ENCODE measurements at regions of chr1 and their contacts with region 1.

Region 1: GRCh38 chr1:81800695-81801650 is at the start of gene ADGRL2:
- DNase-seq: peak; percentile 74 to 91
- ATAC-seq: peak; percentile 84 to 92 (median 88)
- H3K4me3 ChIP-seq: peak within 1 kb of the TSS; percentile 70 to 99 (median 92)
- H3K27ac ChIP-seq: peak within 1 kb of the TSS; percentile 93 to 99 (median 98)
- H3K4me1 ChIP-seq: peaks cover 0 to 37% (median 18%) of the 10 kb centered on the region in 9 donors
- H3K27me3 ChIP-seq: peaks cover 0 to 46% (median 0%) of the 10 kb centered on the region in 7 donors
- CTCF ChIP-seq: no peak
- total RNA-seq, gene ADGRL2: 40.0 to 58.7 (median 49.3) TPM

Region 2: DNA sequence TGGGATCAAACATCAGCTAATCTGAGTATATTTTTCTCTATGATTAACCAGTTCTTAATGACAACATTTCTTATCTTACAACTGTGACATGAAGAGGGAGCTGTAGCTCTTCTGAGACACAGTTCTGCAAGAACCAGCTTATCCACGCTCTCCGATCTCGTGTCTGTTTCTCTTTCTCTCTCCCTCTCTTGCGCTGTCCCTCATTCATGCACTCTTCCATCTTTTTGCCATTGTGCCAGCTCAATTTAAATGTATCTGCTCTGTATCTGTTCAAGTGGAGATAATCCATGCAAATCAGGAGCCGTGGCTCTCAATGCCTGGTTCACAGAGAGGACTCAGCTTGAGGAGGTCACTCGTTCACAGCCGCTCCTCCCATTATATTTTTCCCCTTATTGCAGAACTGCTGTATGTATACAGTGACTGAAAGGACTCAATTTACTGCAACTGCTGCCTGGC is 494.9 kb before region 1 on chr1:
- intact Hi-C with region 1: loop called in 6 of 10 experiments (anchors 2 to 10 kb)
- DNase-seq: peak in 1 of 2 donors; percentile 24
- ATAC-seq: peak; percentile 84 to 94 (median 91)
- H3K4me3 ChIP-seq: peak overlapping the region; percentile 26 to 64 (median 55)
- H3K27ac ChIP-seq: peak overlapping the region in 6 of 10 donors; percentile 13 to 55 (median 18)
- H3K4me1 ChIP-seq: no peaks in the 10 kb centered on the region
- H3K27me3 ChIP-seq: no peaks in the 10 kb centered on the region
- CTCF ChIP-seq: peak in 8 of 9 donors; percentile 32 to 76 (median 56)

Region 3: GRCh38 chr1:81820765-81821164 is 19.8 kb after region 1 on chr1:
- intact Hi-C with region 1: no loop called
- DNase-seq: no peak
- ATAC-seq: no peak
- H3K4me3 ChIP-seq: no peak overlapping the region
- H3K27ac ChIP-seq: no peak overlapping the region
- H3K4me1 ChIP-seq: peaks cover 0 to 26% (median 3%) of the 10 kb centered on the region in 9 donors
- H3K27me3 ChIP-seq: no peaks in the 10 kb centered on the region
- CTCF ChIP-seq: no peak

Region 4: DNA sequence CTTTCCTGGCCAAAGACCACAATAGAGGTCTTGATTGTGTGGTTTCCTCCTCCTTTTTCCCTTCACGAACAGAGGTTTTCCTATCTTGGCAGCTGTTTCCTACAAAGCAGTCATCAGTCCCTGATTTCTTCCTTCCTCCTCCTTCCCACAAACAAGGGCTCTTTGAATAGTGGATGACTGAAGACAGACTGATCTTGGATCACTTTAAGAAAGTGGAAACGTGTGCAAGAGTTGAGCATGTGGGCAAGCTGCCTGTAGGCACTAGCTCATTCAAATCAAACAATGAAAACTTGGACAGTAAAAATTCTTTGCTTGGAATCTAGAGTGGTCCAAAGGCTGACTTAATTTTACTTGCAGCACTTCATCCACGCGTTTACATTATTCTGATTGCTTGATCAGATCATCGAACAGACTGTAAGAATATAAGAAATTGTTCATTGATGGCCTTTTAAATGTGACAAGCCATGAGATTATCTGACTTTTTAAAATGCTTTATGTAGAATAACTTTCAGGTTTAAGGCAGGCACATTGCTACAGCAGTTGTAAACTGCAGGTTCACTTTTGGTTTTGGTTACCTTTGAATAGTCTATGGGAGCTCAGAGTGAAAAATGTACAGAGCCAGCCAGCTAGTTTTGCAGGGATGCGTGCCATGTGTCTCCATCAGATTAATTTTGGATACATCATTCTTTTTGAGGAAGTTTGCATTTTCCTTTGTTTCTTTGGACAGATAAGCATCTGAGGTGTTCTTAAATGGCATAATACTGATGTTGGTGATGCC is 34.1 kb after region 1 on chr1:
- intact Hi-C with region 1: no loop called
- DNase-seq: peak in 1 of 2 donors; percentile 41
- ATAC-seq: peak; percentile 68 to 93 (median 88)
- H3K4me3 ChIP-seq: peak overlapping the region in 4 of 10 donors; percentile 1 to 28 (median 3)
- H3K27ac ChIP-seq: peak overlapping the region in 4 of 10 donors; percentile 2 to 29 (median 18)
- H3K4me1 ChIP-seq: peaks cover 0 to 66% (median 44%) of the 10 kb centered on the region in 9 donors
- H3K27me3 ChIP-seq: no peaks in the 10 kb centered on the region
- CTCF ChIP-seq: no peak

Region 5: GRCh38 chr1:81937791-81938450 is 136.9 kb after region 1 on chr1:
- intact Hi-C with region 1: loop called in 2 of 10 experiments (anchors 5 to 10 kb)
- DNase-seq: no peak
- ATAC-seq: peak in 4 of 8 donors; percentile 49 to 84 (median 62)
- H3K4me3 ChIP-seq: no peak overlapping the region
- H3K27ac ChIP-seq: peak overlapping the region in 2 of 10 donors; percentile 7 to 18
- H3K4me1 ChIP-seq: peaks cover 0 to 29% (median 17%) of the 10 kb centered on the region in 9 donors
- H3K27me3 ChIP-seq: no peaks in the 10 kb centered on the region
- CTCF ChIP-seq: no peak

Region 6: GRCh38 chr1:81950591-81951244 is 149.7 kb after region 1 on chr1:
- intact Hi-C with region 1: loop called in 1 of 10 experiments (anchors 10 kb)
- DNase-seq: no peak
- ATAC-seq: no peak
- H3K4me3 ChIP-seq: peak overlapping the region in 3 of 10 donors; percentile 1 to 21 (median 8)
- H3K27ac ChIP-seq: no peak overlapping the region
- H3K4me1 ChIP-seq: peaks cover 0 to 33% (median 6%) of the 10 kb centered on the region in 9 donors
- H3K27me3 ChIP-seq: no peaks in the 10 kb centered on the region
- CTCF ChIP-seq: no peak

Region 7: DNA sequence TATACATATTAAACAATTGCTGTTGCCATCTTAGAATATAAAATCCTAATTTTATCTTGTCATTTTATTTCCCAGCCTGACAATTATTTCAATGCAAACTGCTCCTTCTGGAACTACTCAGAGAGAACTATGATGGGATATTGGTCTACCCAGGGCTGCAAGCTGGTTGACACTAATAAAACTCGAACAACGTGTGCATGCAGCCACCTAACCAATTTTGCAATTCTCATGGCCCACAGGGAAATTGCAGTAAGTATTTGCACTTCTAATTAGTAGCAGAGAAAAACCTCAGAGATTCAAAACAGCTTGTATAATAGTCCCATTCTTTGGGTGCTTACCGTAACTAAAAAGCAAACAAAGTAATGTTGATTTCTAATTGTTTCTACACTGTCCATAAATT is 167.0 kb after region 1 on chr1:
- intact Hi-C with region 1: loop called in 2 of 10 experiments (anchors 10 kb)
- DNase-seq: no peak
- ATAC-seq: no peak
- H3K4me3 ChIP-seq: no peak overlapping the region
- H3K27ac ChIP-seq: no peak overlapping the region
- H3K4me1 ChIP-seq: no peaks in the 10 kb centered on the region
- H3K27me3 ChIP-seq: no peaks in the 10 kb centered on the region
- CTCF ChIP-seq: no peak

Region 8: GRCh38 chr1:81978945-81979344 is 178.0 kb after region 1 on chr1:
- intact Hi-C with region 1: loop called in 2 of 10 experiments (anchors 10 kb)
- DNase-seq: no peak
- ATAC-seq: no peak
- H3K4me3 ChIP-seq: no peak overlapping the region
- H3K27ac ChIP-seq: no peak overlapping the region
- H3K4me1 ChIP-seq: peaks cover 0 to 29% (median 6%) of the 10 kb centered on the region in 9 donors
- H3K27me3 ChIP-seq: no peaks in the 10 kb centered on the region
- CTCF ChIP-seq: no peak

Region 9: DNA sequence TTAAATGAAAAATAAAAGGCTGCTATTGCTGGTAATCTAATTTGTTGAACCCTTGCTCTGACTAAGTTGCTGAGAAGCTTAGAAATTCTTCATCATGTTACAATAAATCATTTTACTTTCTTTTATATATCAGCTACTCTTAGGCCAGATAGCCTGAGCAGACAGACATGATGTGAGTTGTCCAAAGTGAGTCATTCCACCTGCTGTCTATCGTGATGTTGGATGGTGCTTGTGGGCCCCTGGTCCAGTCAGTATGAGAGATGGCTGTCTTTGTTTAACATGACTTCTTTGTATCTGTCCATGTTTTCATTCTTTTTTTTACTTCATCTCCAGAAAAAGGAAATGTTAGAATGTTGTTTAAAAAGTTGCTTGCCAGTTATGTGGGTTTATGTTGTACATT is 188.6 kb after region 1 on chr1:
- intact Hi-C with region 1: loop called in 1 of 10 experiments (anchors 10 kb)
- DNase-seq: no peak
- ATAC-seq: no peak
- H3K4me3 ChIP-seq: no peak overlapping the region
- H3K27ac ChIP-seq: no peak overlapping the region
- H3K4me1 ChIP-seq: no peaks in the 10 kb centered on the region
- H3K27me3 ChIP-seq: no peaks in the 10 kb centered on the region
- CTCF ChIP-seq: no peak

Measured in heart right ventricle (tissue), 16 donors.